ENCODE measurements at regions of chr11 and their contacts with region 1.

Region 1: GRCh38 chr11:75133976-75134375 is 16.9 kb upstream of the SLCO2B1 start:
- DNase-seq: no peak
- H3K4me3 Mint-ChIP-seq: no peak overlapping the region
- H3K27ac Mint-ChIP-seq: no peak overlapping the region
- H3K4me1 Mint-ChIP-seq: no peaks in the 10 kb centered on the region
- H3K27me3 Mint-ChIP-seq: peaks cover 12% of the 10 kb centered on the region

Region 2: DNA sequence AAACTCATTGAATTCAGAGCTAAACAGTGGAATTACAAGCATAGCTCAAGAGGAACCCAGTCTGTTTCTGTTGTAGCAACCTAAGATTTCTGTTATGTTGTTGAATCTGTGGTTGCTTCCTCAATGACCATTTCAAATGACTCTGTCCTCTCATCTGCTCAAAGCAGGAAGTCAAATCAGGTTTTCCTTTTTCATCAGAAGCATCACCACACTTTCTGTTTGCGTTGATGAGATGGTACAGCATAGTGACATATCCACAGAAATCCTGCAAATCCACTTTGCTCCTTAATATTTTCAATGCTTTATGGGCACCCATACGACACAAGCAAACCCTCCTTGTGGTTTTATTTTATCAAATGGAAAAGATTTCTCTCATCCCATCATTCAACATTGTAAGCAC is 1138.7 kb before region 1 on chr11:
- CTCF ChIA-PET with region 1: no interaction called
- intact Hi-C with region 1: no loop called
- DNase-seq: no peak
- H3K4me3 Mint-ChIP-seq: peak overlapping the region; percentile 44
- H3K27ac Mint-ChIP-seq: peak overlapping the region; percentile 85
- H3K4me1 Mint-ChIP-seq: peaks cover 68% of the 10 kb centered on the region
- H3K27me3 Mint-ChIP-seq: no peaks in the 10 kb centered on the region

Region 3: DNA sequence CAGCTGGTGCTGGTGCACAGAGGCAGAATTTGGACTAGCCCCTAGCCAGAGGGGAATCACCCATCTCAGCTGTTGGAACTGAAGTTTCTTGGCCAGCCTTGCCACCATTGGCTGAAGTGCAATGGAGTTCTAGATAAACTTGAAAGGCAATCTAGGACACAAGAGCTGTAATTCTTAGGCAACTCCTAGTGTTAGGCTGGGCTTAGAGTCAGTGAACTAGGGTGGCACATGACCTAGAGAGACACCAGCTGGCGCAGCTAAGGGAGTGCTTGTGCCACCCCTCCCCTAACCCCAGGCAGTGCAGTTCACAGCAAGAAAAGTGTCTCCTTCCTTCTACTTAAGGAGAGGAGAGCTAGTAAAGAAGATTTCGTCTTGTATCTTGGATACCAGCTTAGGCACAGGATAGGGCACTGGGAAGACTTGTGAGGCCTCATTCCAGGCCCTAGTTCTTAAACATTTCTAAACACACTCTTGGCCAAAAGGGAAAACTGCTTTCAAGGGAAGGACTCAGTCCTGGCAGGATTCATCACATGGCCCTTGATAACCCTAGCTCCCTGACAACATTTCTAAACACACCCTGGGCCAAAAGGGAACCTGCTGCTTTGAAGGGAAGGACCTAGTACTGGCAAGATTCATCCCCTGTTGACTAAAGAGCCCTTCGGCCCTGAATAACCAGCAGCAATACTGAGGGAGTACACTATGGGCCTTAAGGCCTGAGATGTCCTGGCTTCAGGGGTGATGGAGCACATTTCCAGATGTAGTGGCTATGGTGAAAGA is 238.4 kb before region 1 on chr11:
- CTCF ChIA-PET with region 1: no interaction called
- intact Hi-C with region 1: no loop called
- DNase-seq: no peak
- H3K4me3 Mint-ChIP-seq: no peak overlapping the region
- H3K27ac Mint-ChIP-seq: no peak overlapping the region
- H3K4me1 Mint-ChIP-seq: no peaks in the 10 kb centered on the region
- H3K27me3 Mint-ChIP-seq: no peaks in the 10 kb centered on the region

Region 4: DNA sequence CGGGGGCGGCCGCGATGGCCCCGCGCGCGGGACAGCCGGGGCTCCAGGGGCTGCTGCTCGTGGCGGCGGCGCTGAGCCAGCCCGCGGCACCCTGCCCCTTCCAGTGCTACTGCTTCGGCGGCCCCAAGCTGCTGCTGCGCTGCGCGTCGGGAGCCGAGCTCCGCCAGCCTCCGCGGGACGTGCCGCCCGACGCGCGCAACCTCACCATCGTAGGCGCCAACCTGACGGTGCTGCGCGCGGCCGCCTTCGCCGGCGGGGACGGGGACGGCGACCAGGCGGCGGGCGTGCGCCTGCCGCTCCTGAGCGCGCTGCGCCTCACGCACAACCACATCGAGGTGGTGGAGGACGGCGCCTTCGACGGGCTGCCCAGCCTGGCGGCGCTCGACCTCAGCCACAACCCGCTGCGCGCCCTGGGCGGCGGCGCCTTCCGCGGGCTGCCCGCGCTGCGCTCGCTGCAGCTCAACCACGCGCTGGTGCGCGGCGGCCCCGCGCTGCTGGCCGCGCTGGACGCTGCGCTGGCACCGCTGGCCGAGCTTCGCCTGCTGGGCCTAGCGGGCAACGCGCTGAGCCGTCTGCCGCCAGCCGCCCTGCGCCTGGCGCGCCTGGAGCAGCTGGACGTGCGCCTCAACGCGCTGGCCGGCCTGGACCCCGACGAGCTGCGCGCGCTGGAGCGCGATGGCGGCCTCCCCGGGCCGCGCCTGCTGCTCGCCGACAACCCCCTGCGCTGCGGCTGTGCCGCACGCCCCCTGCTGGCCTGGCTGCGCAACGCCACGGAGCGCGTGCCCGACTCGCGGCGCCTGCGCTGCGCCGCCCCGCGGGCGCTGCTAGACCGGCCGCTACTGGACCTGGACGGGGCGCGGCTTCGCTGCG is 107.3 kb after region 1 on chr11:
- CTCF ChIA-PET with region 1: interaction called, 445 read pairs
- intact Hi-C with region 1: no loop called
- DNase-seq: peak; percentile 86
- H3K4me3 Mint-ChIP-seq: peak overlapping the region; percentile 63
- H3K27ac Mint-ChIP-seq: no peak overlapping the region
- H3K4me1 Mint-ChIP-seq: peaks cover 10% of the 10 kb centered on the region
- H3K27me3 Mint-ChIP-seq: peaks cover 33% of the 10 kb centered on the region

Measured in activated naive CD4-positive, alpha-beta T cell treated with anti-CD3 and anti-CD28 coated beads for 36 hours (primary cell).